Spleen (tissue), 13 donors: ENCODE measurements at regions of chr15 and their contacts with region 1.

Region 1: DNA sequence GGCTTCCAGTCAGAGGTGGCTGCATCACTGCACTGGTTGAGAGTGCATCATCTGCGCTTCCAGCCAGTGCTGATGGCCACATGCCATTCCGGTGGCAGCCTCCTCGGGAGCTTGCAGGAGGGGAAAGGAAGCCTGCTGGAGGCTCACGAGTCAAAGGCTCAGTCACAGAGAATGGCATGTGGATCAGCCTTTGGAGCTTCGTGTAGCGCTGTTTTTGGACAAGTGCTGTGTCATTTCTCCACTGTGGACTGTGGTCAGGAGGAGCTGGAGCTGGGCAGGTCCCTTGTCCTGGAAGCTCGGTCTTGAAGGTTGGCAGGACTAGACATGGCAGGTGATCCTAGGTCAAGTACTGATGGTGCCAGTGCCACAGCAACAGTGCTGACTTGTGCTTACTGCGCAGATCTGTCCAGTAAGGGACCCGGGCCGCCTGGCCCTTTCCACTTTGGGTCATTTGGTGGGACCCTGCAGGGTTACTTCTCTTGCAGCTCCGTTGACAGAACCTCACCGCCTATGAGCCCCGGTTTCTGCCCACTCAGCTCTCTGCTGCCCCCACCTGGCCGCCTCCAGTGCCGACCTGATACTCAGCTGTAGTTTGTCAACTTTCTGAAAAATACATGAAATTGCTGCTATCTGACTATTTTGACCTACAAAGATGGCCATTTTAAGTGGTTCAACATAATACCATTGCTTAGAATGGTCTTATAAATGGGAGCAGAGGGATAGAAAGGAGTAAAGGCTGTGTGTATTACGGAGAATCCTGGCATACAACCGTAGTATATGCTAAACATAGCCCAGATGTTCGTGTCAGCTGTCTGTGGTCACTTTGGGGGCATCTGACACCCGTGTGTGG is 27.6 kb upstream of the TRPM1 start:
- DNase-seq: peak; percentile 95
- H3K4me3 ChIP-seq: peak overlapping the region in 1 of 8 donors; percentile 30
- H3K27ac ChIP-seq: no peak overlapping the region
- H3K4me1 ChIP-seq: peaks cover 0 to 10% (median 9%) of the 10 kb centered on the region in 6 donors
- H3K27me3 ChIP-seq: no peaks in the 10 kb centered on the region
- CTCF ChIP-seq: peak; percentile 62 to 93 (median 90)
- POLR2A ChIP-seq: no peak

Region 2: GRCh38 chr15:30940359-30940758 is 188.8 kb before region 1 on chr15:
- intact Hi-C with region 1: loop called (anchors 10 kb)
- DNase-seq: no peak
- H3K4me3 ChIP-seq: no peak overlapping the region
- H3K27ac ChIP-seq: no peak overlapping the region
- H3K4me1 ChIP-seq: no peaks in the 10 kb centered on the region
- H3K27me3 ChIP-seq: no peaks in the 10 kb centered on the region
- CTCF ChIP-seq: no peak
- POLR2A ChIP-seq: no peak

Region 3: GRCh38 chr15:30985081-30985531 is 144.0 kb before region 1 on chr15:
- intact Hi-C with region 1: loop called (anchors 10 kb)
- DNase-seq: no peak
- H3K4me3 ChIP-seq: peak overlapping the region in 2 of 8 donors; percentile 15 to 36
- H3K27ac ChIP-seq: peak overlapping the region in 7 of 8 donors; percentile 30 to 78 (median 64)
- H3K4me1 ChIP-seq: peaks cover 5 to 100% (median 91%) of the 10 kb centered on the region in 6 donors
- H3K27me3 ChIP-seq: no peaks in the 10 kb centered on the region
- CTCF ChIP-seq: no peak
- POLR2A ChIP-seq: no peak

Region 4: DNA sequence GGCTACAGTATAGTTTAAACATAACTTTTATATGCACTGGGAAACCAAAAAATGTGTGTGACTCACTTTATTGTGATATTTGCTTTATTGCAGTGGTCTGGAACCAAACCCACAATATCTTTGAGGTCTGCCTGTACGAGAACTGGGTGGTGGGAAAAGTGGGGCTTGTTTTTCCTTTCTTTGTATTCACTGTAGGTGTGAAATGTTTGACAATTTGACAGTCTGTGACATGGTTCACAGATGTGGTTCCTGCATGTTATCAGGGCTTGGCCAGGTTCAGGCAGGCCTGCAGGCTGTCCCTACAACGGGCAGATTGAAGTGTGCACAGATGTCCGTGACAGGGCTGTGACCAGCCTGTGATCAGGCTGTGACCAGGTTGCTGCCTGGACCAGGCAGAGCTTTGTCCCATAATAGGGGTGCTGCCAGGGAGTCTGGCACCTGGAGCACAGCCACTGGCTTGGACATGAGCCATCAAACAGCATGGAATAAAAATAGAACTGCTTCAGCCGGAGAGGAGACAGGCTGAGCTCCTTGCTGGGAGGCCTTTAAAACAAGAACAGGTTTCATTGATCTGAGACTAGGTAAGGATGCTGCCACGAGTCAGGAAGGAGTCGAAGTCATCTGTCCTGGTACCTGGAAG is 258.5 kb after region 1 on chr15:
- intact Hi-C with region 1: no loop called
- DNase-seq: no peak
- H3K4me3 ChIP-seq: peak overlapping the region in 1 of 8 donors; percentile 2
- H3K27ac ChIP-seq: peak overlapping the region in 6 of 8 donors; percentile 20 to 93 (median 66)
- H3K4me1 ChIP-seq: peaks cover 0 to 66% (median 24%) of the 10 kb centered on the region in 6 donors
- H3K27me3 ChIP-seq: peaks cover 0 to 14% (median 0%) of the 10 kb centered on the region in 7 donors
- CTCF ChIP-seq: no peak
- POLR2A ChIP-seq: no peak